ENCODE measurements at regions of chrX and their contacts with region 1.

Region 1: DNA sequence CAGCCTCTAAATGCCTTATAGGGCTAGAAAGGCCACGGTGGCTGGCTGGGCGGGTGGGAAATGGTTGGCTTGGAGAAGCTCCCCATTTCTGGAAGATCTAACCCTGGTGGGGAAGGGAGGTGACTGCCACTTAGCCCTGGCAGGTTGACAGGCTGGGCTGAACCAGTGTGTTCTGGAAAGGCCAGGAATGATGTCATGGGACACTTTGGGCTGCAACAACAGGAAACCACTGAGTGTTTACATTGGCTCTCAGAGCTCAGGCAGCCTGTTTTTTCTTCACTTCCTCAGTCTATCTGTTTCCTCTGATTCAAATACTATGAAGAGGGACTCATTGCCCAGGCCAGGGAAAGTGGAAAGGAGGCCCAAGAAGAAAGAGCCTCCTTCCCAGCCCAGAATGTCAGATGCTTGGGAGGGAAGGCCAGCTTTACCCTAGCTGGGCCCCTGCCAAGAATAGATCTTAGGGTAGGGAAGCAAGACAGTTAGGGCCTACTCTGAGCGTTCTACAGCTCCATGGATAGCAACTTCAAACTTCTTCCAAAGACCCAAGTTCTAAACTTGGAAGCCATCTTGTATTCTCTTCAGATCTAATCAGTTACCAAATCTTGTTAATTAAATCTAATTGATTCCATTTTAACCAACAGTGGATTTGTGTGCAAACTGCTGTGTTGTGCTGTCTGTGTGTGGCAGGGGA is 65.8 kb upstream of the MSN start:
- DNase-seq: peak; percentile 75
- H3K4me3 ChIP-seq: no peak overlapping the region
- H3K27ac ChIP-seq: peak overlapping the region; percentile 89
- H3K4me1 ChIP-seq: peaks cover 36% of the 10 kb centered on the region
- H3K27me3 ChIP-seq: no peaks in the 10 kb centered on the region
- CTCF ChIP-seq: peak; percentile 48

Region 2: GRCh38 chrX:65667503-65668376 is 66.1 kb after region 1 on chrX and contains the start of gene MSN:
- intact Hi-C with region 1: loop called (anchors 5 kb)
- DNase-seq: peak; percentile 84
- H3K4me3 ChIP-seq: peak within 1 kb of the TSS; percentile 81
- H3K27ac ChIP-seq: peak within 1 kb of the TSS; percentile 96
- H3K4me1 ChIP-seq: peaks cover 46% of the 10 kb centered on the region
- H3K27me3 ChIP-seq: no peaks in the 10 kb centered on the region
- CTCF ChIP-seq: no peak
- total RNA-seq, gene MSN: 107 TPM

Region 3: DNA sequence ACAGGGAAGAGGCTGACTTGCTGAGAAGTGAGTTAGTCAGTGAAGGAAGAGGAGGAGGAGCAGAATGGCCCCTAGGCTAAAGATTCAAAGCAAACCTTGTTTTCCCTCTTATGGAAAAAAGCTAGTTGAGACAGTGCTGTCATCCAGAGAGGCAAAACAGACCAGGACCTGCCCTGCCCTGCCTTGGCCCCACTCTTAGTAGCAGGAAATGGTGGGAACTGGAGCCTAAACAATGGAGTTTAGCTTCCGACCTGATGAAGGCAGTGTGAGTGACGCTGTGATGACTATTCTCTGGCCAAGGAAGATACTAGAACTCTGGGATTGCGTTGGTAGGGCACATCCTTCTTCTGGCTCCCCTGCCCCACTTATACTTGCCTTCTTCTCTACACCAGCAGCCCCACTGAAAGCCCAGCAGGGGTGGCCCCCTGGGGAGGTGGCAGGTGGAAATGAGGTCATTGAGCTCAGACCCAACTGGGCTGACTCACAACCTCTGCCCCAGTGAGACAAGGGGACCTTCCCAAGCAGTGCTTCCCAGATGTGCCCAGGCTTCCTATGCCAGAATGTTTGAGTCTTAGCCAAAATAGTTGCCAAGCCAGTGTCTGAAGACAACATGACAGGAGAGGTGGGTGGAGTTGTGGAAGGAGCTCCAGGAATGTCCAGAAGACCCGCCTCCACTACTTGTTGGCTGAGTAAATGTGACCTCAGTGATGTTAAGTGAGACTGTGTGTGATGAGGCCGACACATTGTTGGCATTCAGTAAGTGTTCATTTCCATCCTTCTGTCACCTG is 104.6 kb after region 1 on chrX:
- intact Hi-C with region 1: loop called (anchors 10 kb)
- DNase-seq: peak; percentile 33
- H3K4me3 ChIP-seq: no peak overlapping the region
- H3K27ac ChIP-seq: peak overlapping the region; percentile 85
- H3K4me1 ChIP-seq: peaks cover 91% of the 10 kb centered on the region
- H3K27me3 ChIP-seq: no peaks in the 10 kb centered on the region
- CTCF ChIP-seq: no peak